Prostate gland (tissue), 2 donors: ENCODE measurements at regions of chr7 and their contacts with region 1.

Region 1: DNA sequence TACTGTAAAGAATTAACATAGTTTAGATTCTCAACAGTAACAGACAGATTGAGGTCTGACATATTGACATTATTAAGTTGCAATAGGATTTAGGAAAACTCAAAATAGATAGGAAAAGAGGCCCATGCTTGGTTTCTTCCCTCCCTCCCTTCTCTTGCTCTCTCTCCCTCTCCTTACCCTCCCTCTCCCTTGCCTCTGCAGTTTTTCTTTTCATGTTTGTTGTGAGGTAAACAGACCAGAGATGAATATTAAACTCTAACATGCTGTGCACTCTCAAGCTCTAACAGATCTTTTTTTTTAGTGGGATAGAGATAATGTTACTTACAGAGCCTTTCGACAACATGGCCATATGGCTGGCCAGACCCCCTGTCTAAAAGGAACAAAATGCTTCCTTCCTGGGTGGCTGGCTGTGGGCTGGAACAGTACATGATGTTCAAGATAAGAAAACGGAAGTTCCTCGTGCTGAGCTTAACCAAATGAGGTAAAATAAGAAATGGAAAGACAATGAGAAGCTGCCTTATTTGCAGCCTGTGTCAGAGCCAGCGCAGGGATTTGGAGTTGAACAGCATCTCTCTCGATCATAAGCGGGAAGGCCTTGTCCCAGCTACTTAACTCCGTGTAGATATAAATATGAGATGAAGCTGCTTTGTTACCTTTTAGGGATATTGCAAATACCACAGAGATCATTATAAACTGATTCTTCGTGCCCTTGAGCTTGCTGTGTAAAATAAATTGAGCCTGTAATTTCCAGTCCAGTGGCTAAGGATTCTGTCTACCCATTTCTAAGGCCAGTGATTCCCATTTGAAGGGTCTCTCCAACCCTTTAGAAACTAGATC is 391.9 kb upstream of the NPVF start:
- DNase-seq: peak; percentile 47
- H3K4me3 ChIP-seq: no peak overlapping the region
- H3K27ac ChIP-seq: peak overlapping the region; percentile 68 to 86
- H3K4me1 ChIP-seq: peaks cover 2% of the 10 kb centered on the region
- H3K27me3 ChIP-seq: no peaks in the 10 kb centered on the region
- CTCF ChIP-seq: no peak
- POLR2A ChIP-seq: no peak

Region 2: GRCh38 chr7:25656581-25657026 is 36.4 kb after region 1 on chr7:
- intact Hi-C with region 1: loop called (anchors 5 kb)
- DNase-seq: no peak
- H3K4me3 ChIP-seq: no peak overlapping the region
- H3K27ac ChIP-seq: no peak overlapping the region
- H3K4me1 ChIP-seq: no peaks in the 10 kb centered on the region
- H3K27me3 ChIP-seq: no peaks in the 10 kb centered on the region
- CTCF ChIP-seq: no peak
- POLR2A ChIP-seq: no peak